CD14-positive monocyte (primary cell): ENCODE measurements at regions of chrX and their contacts with region 1.

Region 1: DNA sequence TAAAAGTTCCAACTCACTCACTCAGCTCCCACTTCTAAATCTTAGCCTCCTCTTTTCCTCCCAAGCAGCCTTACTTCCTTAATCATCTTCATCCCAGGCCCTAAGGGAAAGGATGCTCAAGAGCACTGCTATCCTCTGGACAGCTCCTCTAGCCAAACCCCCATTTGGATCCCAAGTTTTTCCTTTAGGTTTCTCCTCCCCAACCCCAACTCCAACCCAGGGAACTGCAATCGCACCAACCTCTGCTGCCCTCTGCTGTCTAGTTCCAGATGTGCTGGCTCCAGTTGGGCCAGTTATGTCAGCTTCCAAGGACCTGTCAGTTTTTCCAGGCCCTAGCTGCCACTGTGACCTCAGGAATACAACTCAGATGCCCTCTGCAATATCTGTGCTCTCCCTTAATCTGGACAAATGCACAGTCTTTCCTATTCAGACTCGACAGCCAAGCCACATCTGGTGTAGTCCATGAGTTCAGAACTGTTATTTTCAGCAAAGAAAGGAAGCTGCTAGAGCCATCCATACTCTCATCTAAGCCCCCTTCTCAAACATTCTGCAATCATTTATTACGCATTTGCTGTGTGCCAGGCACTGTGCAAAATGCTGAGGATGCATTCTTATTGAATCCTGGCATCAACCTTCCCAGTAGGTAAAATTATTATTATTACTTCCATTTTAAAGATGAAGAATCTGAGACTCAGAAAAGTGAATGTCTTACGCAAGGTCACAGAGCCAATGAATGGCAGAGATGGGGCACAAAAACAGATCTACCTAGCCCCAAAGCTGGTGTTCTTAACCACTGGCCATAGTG is 12.3 kb upstream of the XPNPEP2 start:
- DNase-seq: peak in 2 of 3 donors; percentile 11 to 14
- H3K4me3 ChIP-seq: no peak overlapping the region
- H3K4me3 Mint-ChIP-seq: no peak overlapping the region
- H3K27ac ChIP-seq: no peak overlapping the region
- H3K27ac Mint-ChIP-seq: peak overlapping the region in 3 of 7 donors; percentile 22 to 69 (median 47)
- H3K4me1 ChIP-seq: peaks cover 2 to 8% of the 10 kb centered on the region in 2 donors
- H3K4me1 Mint-ChIP-seq: peaks cover 16% of the 10 kb centered on the region
- H3K27me3 ChIP-seq: no peaks in the 10 kb centered on the region
- H3K27me3 Mint-ChIP-seq: peaks cover 0 to 12% (median 3%) of the 10 kb centered on the region in 3 donors
- CTCF ChIP-seq: peak; percentile 32

Region 2: GRCh38 chrX:129737916-129738315 is 11.4 kb after region 1 on chrX:
- intact Hi-C with region 1: loop called in 1 of 2 experiments (anchors 2 kb)
- DNase-seq: peak; percentile 75 to 85 (median 75)
- H3K4me3 ChIP-seq: no peak overlapping the region
- H3K4me3 Mint-ChIP-seq: no peak overlapping the region
- H3K27ac ChIP-seq: peak overlapping the region; percentile 67 to 74
- H3K27ac Mint-ChIP-seq: peak overlapping the region; percentile 76 to 93 (median 86)
- H3K4me1 ChIP-seq: peaks cover 51 to 54% of the 10 kb centered on the region in 2 donors
- H3K4me1 Mint-ChIP-seq: peaks cover 52% of the 10 kb centered on the region
- H3K27me3 ChIP-seq: no peaks in the 10 kb centered on the region
- H3K27me3 Mint-ChIP-seq: peaks cover 0 to 3% (median 0%) of the 10 kb centered on the region in 3 donors
- CTCF ChIP-seq: no peak